PC-3 (cell line): ENCODE measurements at regions of chr1 and their contacts with region 1.

Region 1: GRCh38 chr1:14247666-14248065 is 350.8 kb upstream of the KAZN start:
- DNase-seq: no peak
- ATAC-seq: no peak
- H3K4me3 ChIP-seq: no peak overlapping the region
- H3K27ac ChIP-seq: no peak overlapping the region
- H3K4me1 ChIP-seq: no peaks in the 10 kb centered on the region
- H3K27me3 ChIP-seq: no peaks in the 10 kb centered on the region
- CTCF ChIP-seq: no peak

Region 2: DNA sequence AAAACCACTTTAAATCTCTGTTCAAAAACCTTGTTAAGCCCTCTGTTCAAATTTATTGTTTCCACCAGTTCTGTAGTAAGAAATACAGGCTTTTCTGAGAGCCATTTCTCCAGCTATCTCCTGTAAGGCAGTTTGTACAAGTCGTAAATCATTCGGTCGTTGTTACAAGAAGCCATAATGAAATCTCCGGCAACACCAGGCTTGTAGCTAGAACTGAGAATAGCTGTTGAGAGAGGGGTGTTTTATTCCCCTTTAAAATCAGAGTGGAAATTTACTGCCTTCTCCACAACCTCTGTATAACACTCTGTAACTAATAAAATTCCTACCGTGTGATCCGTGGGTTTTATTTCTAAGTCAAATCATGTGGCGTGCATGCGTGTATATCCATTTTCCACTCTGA is 15.0 kb after region 1 on chr1:
- CTCF ChIA-PET with region 1: no interaction called
- POLR2A ChIA-PET with region 1: no interaction called
- intact Hi-C with region 1: loop called (anchors 2 kb)
- DNase-seq: no peak
- ATAC-seq: no peak
- H3K4me3 ChIP-seq: no peak overlapping the region
- H3K27ac ChIP-seq: no peak overlapping the region
- H3K4me1 ChIP-seq: no peaks in the 10 kb centered on the region; the same call in 1 of the 2 replicates
- H3K27me3 ChIP-seq: no peaks in the 10 kb centered on the region
- CTCF ChIP-seq: no peak

Region 3: DNA sequence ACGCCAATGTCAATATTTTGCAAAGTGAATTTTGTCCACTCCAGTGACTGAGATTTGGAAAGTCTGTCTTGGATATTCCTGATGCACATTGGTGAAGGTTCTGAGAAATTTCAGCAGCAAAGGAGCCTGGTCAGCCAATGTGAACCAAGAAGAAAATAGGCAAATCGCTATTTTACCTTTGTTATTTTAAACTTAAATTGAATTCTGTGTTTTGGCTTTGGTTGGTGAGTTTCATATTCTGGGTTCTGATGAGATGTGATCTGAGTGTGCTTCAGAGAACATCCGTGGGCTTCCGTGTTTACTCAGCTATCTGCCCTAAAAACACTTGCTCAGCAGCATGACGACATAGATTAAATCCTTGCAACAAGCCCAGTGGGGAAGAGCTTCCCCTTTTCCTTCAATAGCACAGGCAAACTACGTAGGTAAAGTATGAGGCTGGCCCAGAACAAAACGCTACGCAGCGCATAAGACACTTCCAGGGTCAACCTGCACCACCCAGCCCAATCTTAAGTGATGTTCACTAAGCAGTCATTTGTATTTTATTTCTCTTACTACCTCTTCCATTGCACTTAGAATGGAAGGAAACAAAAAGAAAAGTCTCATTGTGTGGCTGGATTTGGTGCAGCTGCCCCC is 174.4 kb after region 1 on chr1:
- CTCF ChIA-PET with region 1: no interaction called
- POLR2A ChIA-PET with region 1: no interaction called
- intact Hi-C with region 1: no loop called
- DNase-seq: no peak
- ATAC-seq: no peak
- H3K4me3 ChIP-seq: no peak overlapping the region
- H3K27ac ChIP-seq: no peak overlapping the region
- H3K4me1 ChIP-seq: peaks cover 5% of the 10 kb centered on the region
- H3K27me3 ChIP-seq: no peaks in the 10 kb centered on the region
- CTCF ChIP-seq: no peak

Region 4: DNA sequence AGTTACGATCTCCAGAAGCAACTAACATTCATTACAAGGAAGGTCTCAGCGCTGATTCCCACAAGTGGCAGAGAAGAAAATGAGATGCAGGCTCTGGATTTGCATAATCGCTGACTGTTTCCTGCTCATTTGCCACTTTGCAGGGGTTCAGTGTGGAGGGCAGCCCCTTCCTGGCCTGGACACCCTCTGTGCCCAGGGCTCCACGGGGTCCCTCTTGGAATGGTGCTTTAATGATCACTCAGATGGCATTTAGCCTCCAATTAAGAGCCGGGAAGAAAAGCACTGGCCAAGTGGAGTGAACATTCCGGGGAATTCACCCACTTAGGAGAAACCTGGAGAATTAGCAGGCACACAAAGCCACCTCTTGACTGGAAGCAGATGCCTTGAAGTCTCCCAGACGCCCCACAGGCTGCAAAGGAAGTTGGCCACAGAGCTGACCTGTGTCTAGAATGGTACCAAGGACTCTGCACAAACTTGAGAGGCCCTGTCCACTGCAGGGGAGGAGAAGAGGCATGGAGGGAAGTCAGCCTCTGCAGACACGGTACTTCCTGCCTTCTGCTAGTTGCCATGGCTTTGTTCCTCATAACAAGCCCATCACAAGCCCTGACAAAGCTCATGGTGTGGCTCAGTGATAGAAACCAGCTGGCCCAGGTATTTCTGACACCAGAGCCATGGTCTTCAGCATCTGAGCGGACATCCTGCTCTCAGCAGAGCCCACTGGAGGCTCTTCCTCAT is 508.0 kb after region 1 on chr1:
- CTCF ChIA-PET with region 1: no interaction called
- POLR2A ChIA-PET with region 1: no interaction called
- intact Hi-C with region 1: no loop called
- DNase-seq: no peak
- ATAC-seq: no peak
- H3K4me3 ChIP-seq: no peak overlapping the region
- H3K27ac ChIP-seq: no peak overlapping the region
- H3K4me1 ChIP-seq: 0 out of 2 replicates have a peak, but pooled peaks cover 4% of the 10 kb centered on the region
- H3K27me3 ChIP-seq: no peaks in the 10 kb centered on the region
- CTCF ChIP-seq: no peak